Aorta (tissue), 5 donors: ENCODE measurements at regions of chr9 and their contacts with region 1.

Region 1: DNA sequence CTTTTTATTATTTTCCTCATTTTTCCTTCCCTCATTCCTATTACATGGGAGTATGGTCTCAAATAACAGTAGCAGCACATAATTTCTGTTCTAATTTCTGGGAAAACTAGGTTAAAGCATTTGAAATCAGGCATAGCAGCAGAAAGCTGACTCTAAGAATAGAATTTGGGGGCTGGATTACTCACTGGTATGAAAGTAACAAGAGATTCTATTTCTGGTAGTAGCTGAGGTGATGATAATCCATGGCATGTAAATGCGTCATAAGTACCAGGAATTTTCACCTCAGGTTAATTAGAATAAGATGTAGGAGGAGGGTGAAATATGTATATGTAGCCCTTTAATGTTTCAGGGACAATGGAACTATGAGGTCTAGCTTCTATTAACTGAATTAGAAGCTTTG is 662.0 kb downstream of the PTPRD start:
- DNase-seq: no peak
- ATAC-seq: no peak
- H3K4me3 ChIP-seq: no peak overlapping the region
- H3K27ac ChIP-seq: no peak overlapping the region
- H3K4me1 ChIP-seq: no peaks in the 10 kb centered on the region
- H3K27me3 ChIP-seq: no peaks in the 10 kb centered on the region

Region 2: GRCh38 chr9:9574080-9574479 is 376.7 kb before region 1 on chr9:
- intact Hi-C with region 1: loop called in 1 of 2 experiments (anchors 10 kb)
- DNase-seq: no peak
- ATAC-seq: no peak
- H3K4me3 ChIP-seq: no peak overlapping the region
- H3K27ac ChIP-seq: no peak overlapping the region
- H3K4me1 ChIP-seq: no peaks in the 10 kb centered on the region
- H3K27me3 ChIP-seq: no peaks in the 10 kb centered on the region

Region 3: DNA sequence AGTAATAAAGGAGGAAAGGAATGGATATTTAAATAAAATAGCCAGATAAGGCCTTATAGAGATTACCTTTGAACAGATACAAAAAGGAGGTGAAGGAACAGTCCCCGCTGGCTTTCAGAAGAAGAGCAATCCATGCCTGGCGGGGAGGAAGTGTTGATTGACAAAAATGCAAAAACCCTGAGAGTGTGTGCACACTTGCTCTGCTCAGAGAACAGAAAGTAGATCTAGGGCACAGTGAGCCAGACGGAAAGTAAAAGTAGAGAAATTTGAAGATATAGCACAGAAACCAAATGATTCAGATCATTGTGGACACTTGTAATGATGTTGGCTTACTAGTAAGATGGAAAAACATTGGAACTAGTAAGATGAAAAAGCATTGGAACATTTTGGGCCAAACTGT is 58.6 kb before region 1 on chr9:
- intact Hi-C with region 1: no loop called
- DNase-seq: no peak
- ATAC-seq: no peak
- H3K4me3 ChIP-seq: no peak overlapping the region
- H3K27ac ChIP-seq: no peak overlapping the region
- H3K4me1 ChIP-seq: no peaks in the 10 kb centered on the region
- H3K27me3 ChIP-seq: peaks cover 0 to 2% of the 10 kb centered on the region in 2 donors

Region 4: DNA sequence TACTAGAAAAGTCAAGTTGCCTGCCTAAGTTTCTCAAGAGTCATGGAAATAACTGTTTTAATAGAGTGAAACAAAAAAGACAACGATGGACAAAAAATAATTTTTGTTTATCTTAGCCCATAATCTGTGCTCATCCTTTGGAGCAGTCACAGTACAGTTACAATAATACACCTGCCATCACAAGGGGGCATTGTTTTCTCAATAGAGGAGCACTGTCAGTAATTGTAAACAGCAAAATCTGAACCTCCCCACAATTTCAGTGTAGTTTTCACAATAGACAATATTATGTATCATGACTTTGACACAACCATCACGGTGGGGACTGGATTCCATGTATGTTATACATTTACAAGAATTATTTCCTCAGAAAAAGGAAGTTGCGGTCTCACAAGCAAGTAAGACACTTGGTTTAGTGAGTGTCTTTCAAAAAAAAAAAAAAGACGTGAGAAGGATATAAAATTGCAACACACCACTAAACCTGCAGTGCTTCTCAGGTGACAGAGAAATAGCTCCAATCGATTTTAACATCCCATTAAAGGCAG is 75.7 kb after region 1 on chr9:
- intact Hi-C with region 1: no loop called
- DNase-seq: no peak
- ATAC-seq: no peak
- H3K4me3 ChIP-seq: no peak overlapping the region
- H3K27ac ChIP-seq: no peak overlapping the region
- H3K4me1 ChIP-seq: no peaks in the 10 kb centered on the region
- H3K27me3 ChIP-seq: no peaks in the 10 kb centered on the region